Activated CD4-positive, alpha-beta memory T cell treated with anti-CD3 and anti-CD28 coated beads for 36 hours (primary cell): ENCODE measurements at regions of chr1 and their contacts with region 1.

Region 1: GRCh38 chr1:181479137-181479745 is 4.1 kb upstream of the CACNA1E start:
- DNase-seq: peak; percentile 35
- H3K4me3 Mint-ChIP-seq: no peak overlapping the region
- H3K27ac Mint-ChIP-seq: no peak overlapping the region
- H3K4me1 Mint-ChIP-seq: peaks cover 11% of the 10 kb centered on the region
- H3K27me3 Mint-ChIP-seq: peaks cover 24% of the 10 kb centered on the region

Region 2: GRCh38 chr1:181525104-181525721 is 46.0 kb after region 1 on chr1:
- CTCF ChIA-PET with region 1: no interaction called
- POLR2A ChIA-PET with region 1: no interaction called
- intact Hi-C with region 1: no loop called
- DNase-seq: no peak
- H3K4me3 Mint-ChIP-seq: no peak overlapping the region
- H3K27ac Mint-ChIP-seq: no peak overlapping the region
- H3K4me1 Mint-ChIP-seq: no peaks in the 10 kb centered on the region
- H3K27me3 Mint-ChIP-seq: no peaks in the 10 kb centered on the region

Region 3: DNA sequence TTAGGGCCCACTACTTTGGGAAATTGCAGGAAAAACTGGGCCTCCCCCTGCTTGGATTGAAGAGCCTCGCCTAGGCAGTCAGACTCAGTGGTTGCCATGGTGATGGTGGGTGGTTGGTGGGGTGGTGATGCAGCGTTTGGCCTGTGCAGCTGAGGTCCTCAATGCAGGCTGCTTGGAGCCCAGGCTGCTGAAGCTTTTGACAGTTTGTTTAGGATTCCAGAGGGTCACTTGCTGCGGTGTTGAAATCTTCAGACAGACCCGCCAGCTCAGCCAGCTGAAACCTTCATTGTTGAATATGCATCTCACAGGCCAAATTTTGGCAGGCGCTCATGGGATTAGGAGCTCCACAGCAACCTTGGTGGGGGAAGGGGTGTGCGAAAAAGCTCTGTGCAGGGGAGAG is 72.0 kb after region 1 on chr1:
- CTCF ChIA-PET with region 1: no interaction called
- POLR2A ChIA-PET with region 1: no interaction called
- intact Hi-C with region 1: no loop called
- DNase-seq: no peak
- H3K4me3 Mint-ChIP-seq: no peak overlapping the region
- H3K27ac Mint-ChIP-seq: no peak overlapping the region
- H3K4me1 Mint-ChIP-seq: no peaks in the 10 kb centered on the region
- H3K27me3 Mint-ChIP-seq: peaks cover 11% of the 10 kb centered on the region

Region 4: GRCh38 chr1:181676269-181676668 is 197.0 kb after region 1 on chr1:
- CTCF ChIA-PET with region 1: interaction called, 7 read pairs
- POLR2A ChIA-PET with region 1: no interaction called
- intact Hi-C with region 1: loop called (anchors 1 kb)
- DNase-seq: no peak
- H3K4me3 Mint-ChIP-seq: no peak overlapping the region
- H3K27ac Mint-ChIP-seq: no peak overlapping the region
- H3K4me1 Mint-ChIP-seq: no peaks in the 10 kb centered on the region
- H3K27me3 Mint-ChIP-seq: peaks cover 9% of the 10 kb centered on the region

Region 5: GRCh38 chr1:181768211-181768929 is 289.1 kb after region 1 on chr1:
- CTCF ChIA-PET with region 1: no interaction called
- POLR2A ChIA-PET with region 1: no interaction called
- intact Hi-C with region 1: no loop called
- DNase-seq: no peak
- H3K4me3 Mint-ChIP-seq: no peak overlapping the region
- H3K27ac Mint-ChIP-seq: no peak overlapping the region
- H3K4me1 Mint-ChIP-seq: no peaks in the 10 kb centered on the region
- H3K27me3 Mint-ChIP-seq: peaks cover 3% of the 10 kb centered on the region

Region 6: GRCh38 chr1:181936768-181937581 is 457.7 kb after region 1 on chr1:
- CTCF ChIA-PET with region 1: interaction called, 8 read pairs
- POLR2A ChIA-PET with region 1: no interaction called
- intact Hi-C with region 1: loop called (anchors 1 kb)
- DNase-seq: peak; percentile 68
- H3K4me3 Mint-ChIP-seq: no peak overlapping the region
- H3K27ac Mint-ChIP-seq: no peak overlapping the region
- H3K4me1 Mint-ChIP-seq: peaks cover 4% of the 10 kb centered on the region
- H3K27me3 Mint-ChIP-seq: no peaks in the 10 kb centered on the region

Region 7: GRCh38 chr1:182054698-182055326 is 575.6 kb after region 1 on chr1:
- CTCF ChIA-PET with region 1: interaction called, 27 read pairs
- POLR2A ChIA-PET with region 1: no interaction called
- intact Hi-C with region 1: loop called (anchors 1 kb)
- DNase-seq: peak; percentile 50
- H3K4me3 Mint-ChIP-seq: no peak overlapping the region
- H3K27ac Mint-ChIP-seq: no peak overlapping the region
- H3K4me1 Mint-ChIP-seq: peaks cover 3% of the 10 kb centered on the region
- H3K27me3 Mint-ChIP-seq: peaks cover 19% of the 10 kb centered on the region